ENCODE measurements at regions of chr17 and their contacts with region 1.

Region 1: GRCh38 chr17:76506408-76507349 is 5.5 kb upstream of the RHBDF2 start:
- DNase-seq: peak; percentile 90
- H3K4me3 Mint-ChIP-seq: no peak overlapping the region
- H3K27ac Mint-ChIP-seq: peak overlapping the region; percentile 42
- H3K4me1 Mint-ChIP-seq: peaks cover 50% of the 10 kb centered on the region
- H3K27me3 Mint-ChIP-seq: peaks cover 36% of the 10 kb centered on the region

Region 2: DNA sequence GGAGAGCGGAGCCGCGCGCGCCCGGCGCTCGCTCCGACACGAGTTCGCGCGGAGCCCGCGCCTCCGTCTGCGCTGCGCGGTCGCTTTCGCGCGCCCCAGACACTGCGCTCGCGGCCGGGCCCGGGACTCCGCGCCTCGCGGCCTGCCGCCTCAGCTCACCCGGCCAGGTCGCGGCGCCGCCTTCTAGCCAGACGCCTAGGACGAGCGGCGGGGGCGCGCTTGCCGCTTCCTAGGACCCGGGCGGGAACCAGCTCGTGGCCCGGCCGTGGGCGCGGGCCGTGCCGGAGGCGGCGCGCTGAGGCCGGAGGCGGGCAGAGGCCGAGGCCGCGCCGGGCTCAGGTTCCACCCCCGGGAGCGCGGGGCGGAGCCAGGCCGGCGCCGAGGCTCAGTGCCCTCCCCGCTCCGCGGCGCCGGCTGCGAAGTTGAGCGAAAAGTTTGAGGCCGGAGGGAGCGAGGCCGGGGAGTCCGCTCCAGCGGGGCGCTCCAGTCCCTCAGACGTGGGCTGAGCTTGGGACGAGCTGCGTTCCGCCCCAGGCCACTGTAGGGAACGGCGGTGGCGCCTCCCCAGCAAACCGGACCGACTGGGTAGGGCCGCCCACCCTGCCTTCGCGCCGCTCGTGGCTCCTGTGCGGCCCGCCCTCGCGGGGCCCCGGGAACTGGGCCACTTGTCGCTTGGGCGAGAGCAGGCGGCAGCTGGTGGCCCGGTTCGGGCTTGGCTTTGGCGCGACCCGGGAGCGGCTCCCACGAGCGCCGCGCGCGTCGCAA is 122.3 kb before region 1 on chr17 and contains the start of gene SPHK1:
- CTCF ChIA-PET with region 1: interaction called, 10 read pairs
- DNase-seq: peak; percentile 77
- H3K4me3 Mint-ChIP-seq: peak within 1 kb of the TSS; percentile 87
- H3K27ac Mint-ChIP-seq: peak within 1 kb of the TSS; percentile 86
- H3K4me1 Mint-ChIP-seq: peaks cover 19% of the 10 kb centered on the region
- H3K27me3 Mint-ChIP-seq: peaks cover 66% of the 10 kb centered on the region

Region 3: GRCh38 chr17:76408052-76408849 is 98.4 kb before region 1 on chr17:
- CTCF ChIA-PET with region 1: interaction called, 17 read pairs
- DNase-seq: peak; percentile 85
- H3K4me3 Mint-ChIP-seq: no peak overlapping the region
- H3K27ac Mint-ChIP-seq: no peak overlapping the region
- H3K4me1 Mint-ChIP-seq: peaks cover 6% of the 10 kb centered on the region
- H3K27me3 Mint-ChIP-seq: no peaks in the 10 kb centered on the region

Region 4: GRCh38 chr17:76458580-76459490 is 47.8 kb before region 1 on chr17:
- CTCF ChIA-PET with region 1: interaction called, 23 read pairs
- DNase-seq: no peak
- H3K4me3 Mint-ChIP-seq: no peak overlapping the region
- H3K27ac Mint-ChIP-seq: no peak overlapping the region
- H3K4me1 Mint-ChIP-seq: no peaks in the 10 kb centered on the region
- H3K27me3 Mint-ChIP-seq: peaks cover 55% of the 10 kb centered on the region

Region 5: DNA sequence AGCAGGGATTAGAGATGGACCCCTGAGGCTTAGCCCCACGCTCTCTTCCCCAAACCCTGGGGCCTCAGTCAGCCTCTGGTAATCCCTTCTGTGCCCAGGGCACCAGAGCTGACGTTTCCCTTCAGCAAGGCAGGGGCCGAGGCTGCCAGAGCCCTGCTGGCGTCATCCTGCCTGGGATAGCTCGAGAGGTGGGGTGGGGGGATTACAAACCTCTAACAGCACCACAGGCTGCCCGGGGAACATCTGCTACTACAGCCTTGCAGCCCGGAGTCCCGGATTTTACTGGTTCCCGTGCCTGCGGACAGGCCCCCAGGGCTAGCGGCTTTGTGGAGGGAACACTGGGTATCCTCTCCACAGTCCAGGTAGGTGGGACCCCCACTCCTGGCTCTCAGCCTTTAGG is 39.3 kb before region 1 on chr17 and contains the start of gene AANAT:
- CTCF ChIA-PET with region 1: interaction called, 58 read pairs
- DNase-seq: no peak
- H3K4me3 Mint-ChIP-seq: no peak within 1 kb of the TSS
- H3K27ac Mint-ChIP-seq: no peak within 1 kb of the TSS
- H3K4me1 Mint-ChIP-seq: peaks cover 6% of the 10 kb centered on the region
- H3K27me3 Mint-ChIP-seq: peaks cover 19% of the 10 kb centered on the region

Region 6: DNA sequence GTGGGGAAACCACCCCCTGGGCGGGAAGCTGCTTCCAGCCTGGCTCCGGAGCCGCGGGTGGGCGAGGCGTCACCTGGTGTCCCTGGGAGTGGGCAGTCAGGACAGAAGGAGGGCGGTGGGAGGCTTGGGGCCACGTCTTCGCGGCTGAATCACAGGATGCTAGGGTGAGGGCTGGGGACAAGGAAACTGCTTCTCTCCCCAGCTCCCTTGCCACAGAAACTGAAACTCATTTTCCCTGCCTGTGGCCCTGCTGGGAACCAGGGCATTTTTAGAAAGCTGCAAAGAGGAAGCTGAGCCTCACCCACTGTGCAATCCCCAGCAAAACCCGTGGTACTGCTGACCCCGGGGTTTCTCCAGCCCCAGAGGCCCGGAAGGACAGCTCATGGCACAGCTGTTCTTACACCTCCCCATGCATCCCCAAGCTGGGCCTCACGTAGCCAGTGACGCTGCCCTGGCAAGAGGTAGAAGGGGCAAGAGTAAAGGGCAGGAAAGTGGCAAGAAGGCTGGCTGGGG is 13.6 kb before region 1 on chr17:
- CTCF ChIA-PET with region 1: interaction called, 17 read pairs
- DNase-seq: peak; percentile 70
- H3K4me3 Mint-ChIP-seq: peak overlapping the region; percentile 66
- H3K27ac Mint-ChIP-seq: peak overlapping the region; percentile 90
- H3K4me1 Mint-ChIP-seq: peaks cover 82% of the 10 kb centered on the region
- H3K27me3 Mint-ChIP-seq: no peaks in the 10 kb centered on the region

Measured in activated naive CD4-positive, alpha-beta T cell treated with anti-CD3 and anti-CD28 coated beads, Interleukin-2, amount 10 ng/mL, durations not matched to agents 7 days and 5 days (primary cell).